Adrenal gland (tissue), 19 donors: ENCODE measurements at regions of chr1 and their contacts with region 1.

Region 1: DNA sequence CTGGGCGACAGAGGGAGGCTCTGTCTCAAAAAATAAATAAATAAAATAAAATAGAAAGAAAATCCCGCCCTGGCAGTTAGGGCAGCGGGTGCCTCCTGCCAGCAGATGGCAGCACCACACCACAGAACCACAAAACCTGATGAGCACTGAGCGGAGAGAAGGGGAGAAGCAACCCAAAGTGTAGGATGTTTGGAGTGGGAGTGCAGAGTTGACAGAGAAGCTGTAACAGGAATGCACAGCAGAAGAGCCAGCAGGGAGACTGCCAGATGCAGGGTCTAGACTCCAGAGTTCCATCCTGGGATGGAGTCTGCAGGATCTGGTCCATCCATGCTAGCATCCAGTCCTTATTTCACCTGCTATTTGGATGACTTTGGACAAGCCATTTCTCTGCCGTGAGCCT is 29.7 kb upstream of the KIRREL1 start:
- DNase-seq: peak; percentile 58 to 82 (median 70)
- H3K4me3 ChIP-seq: no peak overlapping the region
- H3K27ac ChIP-seq: no peak overlapping the region
- H3K4me1 ChIP-seq: peaks cover 0 to 8% of the 10 kb centered on the region in 2 donors
- H3K27me3 ChIP-seq: peaks cover 5% of the 10 kb centered on the region
- CTCF ChIP-seq: peak; percentile 82 to 97 (median 94)
- POLR2A ChIP-seq: no peak

Region 2: DNA sequence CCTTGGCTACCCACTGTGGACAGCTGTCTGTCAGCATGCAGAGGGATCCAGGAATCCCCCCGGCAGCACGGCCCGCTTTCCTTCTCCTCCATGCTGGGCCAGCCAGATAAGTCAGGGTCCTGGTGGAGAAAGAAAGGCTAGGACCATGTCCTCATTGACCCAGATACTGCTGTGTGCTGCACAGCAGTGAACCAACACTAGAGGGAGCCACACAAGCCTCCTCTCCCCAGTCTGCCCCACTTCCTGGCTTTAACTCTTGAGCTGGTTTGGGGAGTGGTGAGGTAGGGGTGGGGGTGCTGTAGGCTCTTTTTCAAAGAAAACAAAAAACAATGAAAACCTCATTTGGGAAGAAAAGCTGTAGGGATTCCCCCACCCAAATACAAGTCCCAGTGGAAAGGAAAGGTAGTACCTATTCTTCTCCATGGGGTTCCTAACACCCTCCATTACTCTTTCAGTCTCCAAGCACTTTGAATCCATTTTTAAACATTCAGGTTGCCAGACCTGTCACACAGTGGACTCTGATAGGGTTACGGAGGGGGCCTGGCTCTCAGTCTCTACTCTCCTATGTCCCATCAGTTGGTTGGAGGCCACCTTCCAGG is 132.1 kb after region 1 on chr1:
- intact Hi-C with region 1: loop called in 1 of 2 experiments (anchors 10 kb)
- DNase-seq: peak in 4 of 7 donors; percentile 18 to 46 (median 36)
- H3K4me3 ChIP-seq: no peak overlapping the region
- H3K27ac ChIP-seq: no peak overlapping the region
- H3K4me1 ChIP-seq: no peaks in the 10 kb centered on the region
- H3K27me3 ChIP-seq: no peaks in the 10 kb centered on the region
- CTCF ChIP-seq: peak; percentile 43 to 61 (median 52)
- POLR2A ChIP-seq: no peak

Region 3: GRCh38 chr1:158212320-158212719 is 248.6 kb after region 1 on chr1:
- intact Hi-C with region 1: no loop called
- DNase-seq: no peak
- H3K4me3 ChIP-seq: no peak overlapping the region
- H3K27ac ChIP-seq: no peak overlapping the region
- H3K4me1 ChIP-seq: no peaks in the 10 kb centered on the region
- H3K27me3 ChIP-seq: peaks cover 9% of the 10 kb centered on the region
- CTCF ChIP-seq: no peak
- POLR2A ChIP-seq: no peak